ENCODE measurements at regions of chr22 and their contacts with region 1.

Region 1: GRCh38 chr22:22666307-22667091 is 22.1 kb downstream of the GGTLC2 start:
- DNase-seq: peak; percentile 50
- H3K4me3 Mint-ChIP-seq: no peak overlapping the region
- H3K27ac Mint-ChIP-seq: no peak overlapping the region
- H3K4me1 Mint-ChIP-seq: no peaks in the 10 kb centered on the region
- H3K27me3 Mint-ChIP-seq: peaks cover 38% of the 10 kb centered on the region

Region 2: DNA sequence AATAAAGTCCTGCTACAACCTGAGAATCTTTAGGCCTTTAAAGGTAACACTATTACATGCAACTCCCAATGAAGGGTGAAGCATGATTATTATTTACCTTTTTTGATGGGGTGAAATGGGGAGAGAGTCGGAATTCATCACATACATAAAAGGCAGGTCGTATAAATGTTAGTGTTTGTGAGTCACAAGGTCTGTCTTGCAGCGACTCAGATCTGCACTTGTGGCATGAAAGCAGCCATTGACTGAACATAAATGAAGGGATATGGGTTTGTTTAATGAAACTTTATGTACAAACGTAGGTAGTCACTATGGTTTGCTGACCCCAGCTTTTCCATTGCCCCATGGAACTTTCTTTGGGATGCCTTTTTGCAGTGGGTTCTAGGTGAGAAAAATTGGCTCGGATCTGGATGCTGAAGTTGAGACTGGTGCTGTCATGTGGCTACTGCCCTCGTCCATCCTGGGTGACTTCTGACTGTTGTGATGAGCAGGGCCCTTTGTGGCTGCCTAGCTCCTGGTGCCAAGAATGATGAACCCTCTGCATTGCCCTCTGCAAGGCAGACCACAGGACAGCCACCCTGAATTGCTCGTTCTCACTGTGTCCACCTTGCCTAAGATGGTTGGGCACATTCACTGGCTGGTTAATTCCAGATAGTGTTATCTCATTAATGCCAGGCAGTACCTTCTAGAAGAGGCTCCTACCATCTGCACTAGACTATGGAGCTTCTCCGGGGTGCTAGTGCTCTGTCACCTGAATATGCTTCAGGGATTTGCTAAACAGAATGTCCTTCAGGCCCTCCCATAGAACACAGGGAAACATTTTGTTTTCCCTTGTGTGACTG is 10.8 kb before region 1 on chr22:
- CTCF ChIA-PET with region 1: interaction called, 12 read pairs
- DNase-seq: no peak
- H3K4me3 Mint-ChIP-seq: no peak overlapping the region
- H3K27ac Mint-ChIP-seq: no peak overlapping the region
- H3K4me1 Mint-ChIP-seq: peaks cover 23% of the 10 kb centered on the region
- H3K27me3 Mint-ChIP-seq: peaks cover 17% of the 10 kb centered on the region

Region 3: GRCh38 chr22:22681221-22681739 is 14.8 kb after region 1 on chr22:
- CTCF ChIA-PET with region 1: interaction called, 27 read pairs
- DNase-seq: peak; percentile 3
- H3K4me3 Mint-ChIP-seq: no peak overlapping the region
- H3K27ac Mint-ChIP-seq: no peak overlapping the region
- H3K4me1 Mint-ChIP-seq: no peaks in the 10 kb centered on the region
- H3K27me3 Mint-ChIP-seq: peaks cover 10% of the 10 kb centered on the region

Region 4: DNA sequence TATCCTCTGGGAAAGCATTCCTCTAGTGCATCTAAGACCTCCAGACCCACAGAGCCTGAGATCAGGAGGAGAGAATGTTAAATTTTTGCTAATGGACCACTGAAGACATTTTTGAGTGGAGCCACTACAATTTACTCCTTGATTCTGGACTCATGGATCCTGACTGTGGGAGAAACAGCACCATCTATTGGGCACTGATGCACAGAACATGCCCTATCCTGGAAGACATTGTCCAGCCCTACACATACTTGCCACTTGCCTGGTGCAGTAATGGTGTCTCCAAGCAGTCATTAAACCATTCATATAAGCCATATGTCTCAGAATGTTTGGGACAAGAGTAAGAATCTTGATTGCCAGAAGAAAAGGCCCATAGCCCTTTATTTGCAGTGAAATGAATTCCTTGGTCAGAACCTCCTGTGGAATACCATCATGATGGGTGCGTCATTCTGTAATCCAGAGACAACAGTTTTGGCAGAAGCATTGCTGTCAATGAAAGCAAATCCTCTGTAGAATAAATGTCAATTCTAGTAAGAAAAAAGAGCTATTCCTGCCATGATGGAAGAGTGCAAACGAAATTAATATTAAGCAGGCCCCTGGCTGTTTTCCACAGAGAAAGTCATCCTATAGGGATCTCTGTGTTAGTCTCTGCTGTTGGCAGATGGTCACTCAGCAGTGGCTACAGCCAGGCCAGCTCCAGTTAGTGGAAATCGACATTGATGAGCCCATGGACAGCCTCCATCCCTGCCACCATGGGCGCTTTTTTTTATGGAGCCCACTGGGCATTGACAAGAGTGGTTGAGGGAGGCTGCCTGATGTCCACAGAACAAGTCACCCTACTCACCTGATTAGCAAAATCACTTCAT is 21.4 kb after region 1 on chr22:
- CTCF ChIA-PET with region 1: interaction called, 27 read pairs
- DNase-seq: peak; percentile 60
- H3K4me3 Mint-ChIP-seq: no peak overlapping the region
- H3K27ac Mint-ChIP-seq: no peak overlapping the region
- H3K4me1 Mint-ChIP-seq: no peaks in the 10 kb centered on the region
- H3K27me3 Mint-ChIP-seq: peaks cover 8% of the 10 kb centered on the region

Region 5: GRCh38 chr22:22710719-22711531 is 44.4 kb after region 1 on chr22:
- CTCF ChIA-PET with region 1: interaction called, 12 read pairs
- DNase-seq: peak; percentile 83
- H3K4me3 Mint-ChIP-seq: no peak overlapping the region
- H3K27ac Mint-ChIP-seq: no peak overlapping the region
- H3K4me1 Mint-ChIP-seq: no peaks in the 10 kb centered on the region
- H3K27me3 Mint-ChIP-seq: peaks cover 41% of the 10 kb centered on the region

Region 6: DNA sequence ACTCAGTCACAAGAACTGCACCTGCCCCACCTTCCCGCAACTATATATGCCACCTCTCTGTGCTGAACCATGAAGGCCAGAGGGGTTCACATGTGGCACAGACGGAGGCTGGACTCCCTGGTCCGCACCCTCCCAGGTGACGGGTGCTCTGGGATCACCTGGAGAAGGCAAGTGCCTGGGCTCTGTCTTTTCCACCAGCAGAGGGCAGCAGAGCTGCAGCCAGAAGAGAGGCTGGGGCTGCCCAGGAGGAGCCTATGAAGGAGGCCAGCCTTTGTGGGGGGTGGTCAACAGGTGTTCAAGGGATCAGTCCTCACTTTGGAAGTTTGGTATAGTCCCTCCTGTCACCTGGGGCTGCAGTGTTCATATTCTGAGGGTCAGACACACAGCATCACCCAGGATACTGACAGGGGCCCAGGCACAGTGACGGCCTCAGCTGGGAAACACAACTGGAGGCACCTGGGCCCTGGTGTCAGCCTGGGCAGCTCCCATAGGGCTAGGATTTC is 181.9 kb after region 1 on chr22:
- CTCF ChIA-PET with region 1: no interaction called
- DNase-seq: peak; percentile 83
- H3K4me3 Mint-ChIP-seq: no peak overlapping the region
- H3K27ac Mint-ChIP-seq: no peak overlapping the region
- H3K4me1 Mint-ChIP-seq: peaks cover 14% of the 10 kb centered on the region
- H3K27me3 Mint-ChIP-seq: peaks cover 54% of the 10 kb centered on the region